B cell (primary cell): ENCODE measurements at regions of chr18 and their contacts with region 1.

Region 1: DNA sequence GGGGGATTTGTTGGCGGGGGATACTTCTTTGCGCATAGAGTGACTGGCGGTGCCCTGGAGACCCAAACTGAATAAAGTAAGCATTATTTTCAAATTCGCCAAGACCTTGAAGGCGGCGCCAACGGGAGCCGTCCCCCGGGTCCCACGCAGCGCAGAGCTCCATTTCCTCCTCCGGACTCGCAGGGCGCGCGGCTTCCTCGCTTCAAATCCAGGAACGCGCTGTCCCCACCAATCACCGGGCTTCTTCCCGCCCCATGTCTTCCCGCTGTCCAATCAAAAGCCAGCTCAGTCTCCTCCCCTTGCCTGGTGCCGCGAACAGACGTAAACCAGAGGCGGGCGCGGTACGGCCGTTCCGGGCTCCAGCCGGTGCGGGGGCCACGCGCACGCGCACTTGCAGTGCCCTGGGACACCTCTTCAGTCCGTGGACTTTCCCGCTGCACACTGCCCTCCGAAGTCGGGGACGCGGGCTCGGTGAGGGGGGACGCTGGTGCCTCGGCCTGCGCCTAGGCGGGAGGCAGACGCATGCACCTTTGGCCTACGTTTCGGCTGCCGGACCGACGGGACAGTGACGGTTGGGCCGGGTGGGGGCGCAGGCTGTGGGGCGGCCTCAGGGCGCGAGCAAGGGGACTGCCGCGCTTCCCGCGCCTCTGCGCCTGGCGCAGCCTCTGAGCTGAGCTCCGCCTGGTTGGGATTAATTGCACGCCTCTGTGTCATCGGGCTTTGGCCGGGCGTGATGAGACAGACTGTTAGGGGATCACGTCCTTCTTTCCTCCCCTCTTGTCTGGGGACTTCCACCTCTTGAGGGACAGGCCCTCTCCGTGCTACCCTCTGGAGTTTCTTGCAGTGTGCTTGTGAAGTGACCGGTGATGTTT is at the start of gene CEP192:
- DNase-seq: peak; percentile 98
- ATAC-seq: peak; percentile 98
- H3K4me3 ChIP-seq: peak within 1 kb of the TSS; percentile 63 to 97 (median 84)
- H3K4me3 Mint-ChIP-seq: peak within 1 kb of the TSS; percentile 99
- H3K27ac ChIP-seq: peak within 1 kb of the TSS; percentile 67 to 88
- H3K27ac Mint-ChIP-seq: peak within 1 kb of the TSS; percentile 97
- H3K4me1 ChIP-seq: peaks cover 19 to 25% of the 10 kb centered on the region in 2 donors
- H3K4me1 Mint-ChIP-seq: peaks cover 36% of the 10 kb centered on the region
- H3K27me3 ChIP-seq: no peaks in the 10 kb centered on the region
- H3K27me3 Mint-ChIP-seq: no peaks in the 10 kb centered on the region
- CTCF ChIP-seq: peak; percentile 36
- total RNA-seq, gene CEP192: 44.3 and 47.3 TPM in 2 replicates

Region 2: GRCh38 chr18:12702221-12703095 is 288.7 kb before region 1 on chr18 and contains the starts of genes CEP76 and PSMG2:
- CTCF ChIA-PET with region 1: no interaction called
- POLR2A ChIA-PET with region 1: no interaction called
- intact Hi-C with region 1: loop called (anchors 1 kb)
- DNase-seq: peak; percentile 96
- ATAC-seq: peak; percentile 85
- H3K4me3 ChIP-seq: peak within 1 kb of the TSS; percentile 84 to 95 (median 86)
- H3K4me3 Mint-ChIP-seq: peak within 1 kb of the TSS; percentile 99
- H3K27ac ChIP-seq: peak within 1 kb of the TSS; percentile 96 to 100
- H3K27ac Mint-ChIP-seq: peak within 1 kb of the TSS; percentile 100
- H3K4me1 ChIP-seq: peaks cover 22 to 26% of the 10 kb centered on the region in 2 donors
- H3K4me1 Mint-ChIP-seq: peaks cover 37% of the 10 kb centered on the region
- H3K27me3 ChIP-seq: no peaks in the 10 kb centered on the region
- H3K27me3 Mint-ChIP-seq: no peaks in the 10 kb centered on the region
- CTCF ChIP-seq: no peak
- total RNA-seq, gene CEP76: 10.0 and 12.6 TPM in 2 replicates
- total RNA-seq, gene PSMG2: 61.2 and 64.1 TPM in 2 replicates

Region 3: DNA sequence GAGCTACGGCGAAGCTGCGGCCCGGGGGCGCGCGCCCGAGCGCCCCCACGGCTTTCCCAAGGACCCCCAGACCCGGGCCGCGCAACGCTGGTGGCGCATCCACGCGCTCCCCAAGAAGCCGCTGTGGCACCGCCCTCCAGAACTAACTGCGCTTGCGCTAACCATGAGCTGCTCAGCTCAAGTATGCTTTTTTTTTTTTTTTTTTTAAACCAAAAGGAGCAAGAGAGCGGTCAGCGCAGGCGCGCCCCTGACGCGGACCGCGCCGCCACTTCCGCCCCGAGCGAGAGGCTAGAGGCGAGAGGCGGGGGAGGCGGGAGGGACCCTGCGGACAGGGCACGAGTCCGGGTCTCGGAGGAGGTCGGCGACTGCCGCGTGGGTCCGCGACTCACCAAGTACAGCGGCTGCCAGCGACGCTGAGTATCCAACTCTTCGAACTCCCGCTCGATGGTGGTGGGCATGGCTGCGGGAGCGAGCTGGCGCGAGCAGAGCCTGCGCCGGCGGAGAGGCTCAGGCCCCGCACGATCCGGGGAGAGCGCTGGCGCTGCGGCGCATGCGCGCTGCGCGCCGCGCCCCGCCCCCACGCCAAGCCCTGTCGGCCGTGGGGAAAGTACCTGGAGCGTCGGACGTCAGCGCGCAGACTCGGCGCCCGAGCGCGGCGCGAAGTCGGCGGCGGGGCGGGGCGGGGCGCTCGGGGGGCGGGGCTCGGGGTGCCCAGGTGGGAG is 107.4 kb before region 1 on chr18 and contains the start of gene PTPN2:
- CTCF ChIA-PET with region 1: no interaction called
- POLR2A ChIA-PET with region 1: interaction called, 5 read pairs
- intact Hi-C with region 1: loop called (anchors 1 kb)
- DNase-seq: peak; percentile 97
- ATAC-seq: peak; percentile 76
- H3K4me3 ChIP-seq: peak within 1 kb of the TSS; percentile 66 to 92 (median 78)
- H3K4me3 Mint-ChIP-seq: peak within 1 kb of the TSS; percentile 89
- H3K27ac ChIP-seq: peak within 1 kb of the TSS; percentile 99
- H3K27ac Mint-ChIP-seq: peak within 1 kb of the TSS; percentile 95
- H3K4me1 ChIP-seq: peaks cover 64 to 71% of the 10 kb centered on the region in 2 donors
- H3K4me1 Mint-ChIP-seq: peaks cover 71% of the 10 kb centered on the region
- H3K27me3 ChIP-seq: no peaks in the 10 kb centered on the region
- H3K27me3 Mint-ChIP-seq: no peaks in the 10 kb centered on the region
- CTCF ChIP-seq: no peak
- total RNA-seq, gene PTPN2: 64.8 and 75.5 TPM in 2 replicates

Region 4: DNA sequence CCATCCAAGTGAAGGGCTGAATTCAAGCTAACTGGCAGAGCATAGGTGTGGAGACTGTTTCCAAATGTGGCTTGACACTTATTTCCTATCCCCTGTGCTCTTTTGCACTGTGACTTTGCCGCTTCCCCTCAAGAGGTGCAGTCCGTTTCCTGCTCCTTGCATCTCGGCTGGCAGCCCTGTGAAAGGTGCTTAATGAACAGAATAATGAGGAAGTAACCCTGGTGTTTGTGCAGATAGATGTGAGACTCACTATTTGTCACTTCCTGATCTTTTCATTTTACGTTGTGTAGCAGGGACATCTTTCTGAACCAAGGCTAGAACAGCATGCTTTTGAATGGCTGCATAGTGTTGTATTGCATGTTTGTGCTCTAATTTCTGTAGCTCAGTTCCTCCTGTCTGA is 60.7 kb after region 1 on chr18:
- CTCF ChIA-PET with region 1: no interaction called
- POLR2A ChIA-PET with region 1: no interaction called
- intact Hi-C with region 1: loop called (anchors 2 kb)
- DNase-seq: peak; percentile 73
- ATAC-seq: peak; percentile 96
- H3K4me3 ChIP-seq: peak overlapping the region in 3 of 5 experiments; percentile 8 to 37 (median 9)
- H3K4me3 Mint-ChIP-seq: peak overlapping the region; percentile 24
- H3K27ac ChIP-seq: peak overlapping the region; percentile 17 to 78
- H3K27ac Mint-ChIP-seq: peak overlapping the region; percentile 83
- H3K4me1 ChIP-seq: peaks cover 11 to 12% of the 10 kb centered on the region in 2 donors
- H3K4me1 Mint-ChIP-seq: peaks cover 17% of the 10 kb centered on the region
- H3K27me3 ChIP-seq: no peaks in the 10 kb centered on the region
- H3K27me3 Mint-ChIP-seq: no peaks in the 10 kb centered on the region
- CTCF ChIP-seq: no peak

Region 5: DNA sequence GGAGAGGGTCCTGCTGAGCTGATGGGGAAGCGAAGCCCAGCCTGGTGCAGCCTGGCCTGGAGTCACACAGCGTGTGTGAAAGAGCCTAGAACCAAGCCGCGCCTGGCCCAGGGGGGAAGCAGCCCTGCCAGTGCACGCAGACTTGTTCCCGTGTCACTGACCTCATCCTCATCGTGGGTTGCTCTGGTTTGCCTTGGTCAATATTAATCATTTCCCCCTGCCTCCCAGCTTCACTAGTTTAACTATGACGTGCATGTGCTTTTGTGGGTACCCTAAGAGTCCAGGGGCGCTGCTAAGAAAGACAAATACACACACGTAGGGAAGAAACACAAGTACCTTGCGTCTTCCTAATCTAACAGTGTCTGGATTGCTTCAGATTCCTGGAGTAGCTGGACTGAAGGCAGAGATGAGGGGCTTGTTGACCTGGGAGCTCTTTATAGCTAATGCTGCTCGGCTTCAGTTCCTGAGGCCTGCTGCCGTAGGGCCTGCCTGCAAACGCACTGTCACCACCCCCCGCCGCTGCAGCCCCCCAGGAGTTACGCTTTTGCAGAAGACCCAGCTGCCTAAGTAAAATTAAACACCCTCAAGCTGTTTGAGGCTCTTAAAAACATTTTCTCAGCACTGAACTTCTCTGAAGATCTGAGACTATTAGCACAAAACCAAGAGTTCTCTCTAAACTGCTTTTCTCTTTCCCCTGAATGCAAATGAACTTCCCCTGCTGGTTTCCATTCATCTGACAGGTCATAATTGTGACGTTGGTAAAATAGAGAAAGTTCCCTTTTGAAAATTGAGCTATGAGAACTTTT is 575.9 kb after region 1 on chr18:
- CTCF ChIA-PET with region 1: no interaction called
- POLR2A ChIA-PET with region 1: interaction called, 4 read pairs
- intact Hi-C with region 1: loop called (anchors 5 kb)
- DNase-seq: peak; percentile 88
- ATAC-seq: peak; percentile 60
- H3K4me3 ChIP-seq: peak overlapping the region; percentile 26 to 53 (median 35)
- H3K4me3 Mint-ChIP-seq: peak overlapping the region; percentile 88
- H3K27ac ChIP-seq: peak overlapping the region; percentile 97
- H3K27ac Mint-ChIP-seq: peak overlapping the region; percentile 95
- H3K4me1 ChIP-seq: peaks cover 67 to 72% of the 10 kb centered on the region in 2 donors
- H3K4me1 Mint-ChIP-seq: peaks cover 75% of the 10 kb centered on the region
- H3K27me3 ChIP-seq: no peaks in the 10 kb centered on the region
- H3K27me3 Mint-ChIP-seq: no peaks in the 10 kb centered on the region
- CTCF ChIP-seq: no peak